ENCODE measurements at regions of chr2 and their contacts with region 1.

Region 1: GRCh38 chr2:111986116-111986900 is 68.8 kb upstream of the TMEM87B start:
- DNase-seq: no peak

Region 2: DNA sequence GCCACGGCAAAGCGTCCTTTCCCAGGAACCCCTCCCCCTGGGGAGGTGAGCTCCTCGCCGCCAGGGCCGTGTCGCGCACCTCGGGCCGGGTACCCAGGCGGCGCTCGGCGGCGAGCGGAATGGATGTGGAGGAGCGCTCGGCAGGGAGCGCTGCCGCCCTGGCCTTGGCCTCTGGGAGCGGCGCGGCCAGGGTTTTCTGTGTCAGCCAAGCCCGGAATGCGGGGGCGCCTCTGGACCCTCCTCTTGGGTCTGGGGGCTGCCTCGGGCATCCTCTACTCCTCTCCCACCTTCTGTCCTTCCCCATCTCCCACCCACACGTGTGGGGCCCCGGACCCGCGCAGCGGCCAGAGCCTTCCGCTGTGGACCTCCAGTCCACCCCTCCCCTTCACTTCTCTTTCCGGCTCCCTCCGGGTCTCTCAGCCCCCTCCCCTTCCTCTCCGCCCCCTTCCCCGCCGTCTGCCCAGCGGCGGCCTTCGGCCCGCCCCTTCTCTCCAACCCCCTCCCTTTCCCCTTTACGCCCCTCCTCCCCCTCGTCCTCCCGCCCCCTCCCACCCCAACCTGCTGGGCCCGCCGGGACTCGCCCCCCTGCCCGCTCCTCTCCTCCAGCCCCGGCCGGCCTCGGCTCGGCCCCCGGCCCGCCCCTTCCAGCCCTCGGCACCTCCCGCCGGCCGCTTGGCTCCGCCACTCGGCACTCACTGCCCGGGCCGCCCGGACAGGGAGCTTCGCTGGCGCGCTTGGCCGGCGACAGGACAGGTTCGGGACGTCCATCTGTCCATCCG is 88.2 kb before region 1 on chr2 and contains the start of gene MERTK:
- intact Hi-C with region 1: loop called in 1 of 2 experiments (anchors 10 kb)
- DNase-seq: peak; percentile 95
- total RNA-seq, gene MERTK: 34.2 to 37.5 TPM

Region 3: GRCh38 chr2:111919794-111920608 is 66.3 kb before region 1 on chr2:
- intact Hi-C with region 1: loop called in 1 of 2 experiments (anchors 10 kb)
- DNase-seq: peak; percentile 83

Region 4: DNA sequence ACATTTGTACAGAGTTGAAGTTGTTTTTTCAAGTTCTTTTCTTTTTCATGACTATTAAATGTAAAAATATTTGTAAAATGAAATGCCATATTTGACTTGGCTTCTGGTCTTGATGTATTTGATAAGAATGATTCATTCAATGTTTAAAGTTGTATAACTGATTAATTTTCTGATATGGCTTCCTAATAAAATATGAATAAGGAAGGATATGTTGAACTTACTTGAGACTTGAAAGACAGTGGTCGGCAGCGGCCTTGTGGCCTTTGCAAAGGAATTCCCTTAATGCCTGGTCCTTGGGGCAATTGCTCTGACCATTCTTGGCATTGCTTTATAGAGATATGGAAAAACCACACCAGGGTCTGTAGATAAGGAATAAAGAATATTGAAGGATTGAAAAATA is 42.9 kb after region 1 on chr2:
- intact Hi-C with region 1: loop called in 1 of 2 experiments (anchors 1 kb)
- DNase-seq: no peak

Measured in posterior vena cava (tissue), 2 donors.